ENCODE measurements at regions of chr2 and their contacts with region 1.

Region 1: DNA sequence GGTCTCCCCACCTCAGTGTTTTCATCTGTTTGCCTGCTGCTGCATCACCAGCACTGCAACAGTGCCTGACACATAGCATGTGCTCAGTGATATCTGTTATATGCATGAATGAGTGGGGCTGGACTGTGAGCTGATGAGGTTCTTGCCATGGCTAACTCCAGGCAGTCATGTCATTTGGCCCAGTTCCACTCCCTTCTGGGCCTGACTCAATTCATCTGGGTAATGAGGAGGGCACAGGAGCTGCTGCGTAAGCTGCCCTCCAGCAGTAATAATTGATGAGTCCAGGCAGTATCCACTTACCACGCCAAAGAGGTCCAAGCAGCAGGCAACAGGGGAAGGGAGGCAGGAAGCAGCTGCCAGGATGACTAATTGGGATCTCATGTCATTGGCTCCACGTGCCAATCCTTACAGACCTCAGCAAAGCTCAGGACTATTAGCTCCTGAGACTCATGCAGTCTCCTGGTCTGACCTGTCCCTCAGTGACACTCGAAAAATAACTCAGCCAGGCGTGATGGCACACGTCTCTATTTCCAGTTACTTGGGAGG is 34.1 kb upstream of the MAT2A start:
- DNase-seq: no peak
- ATAC-seq: no peak
- H3K4me3 ChIP-seq: no peak overlapping the region
- H3K27ac ChIP-seq: no peak overlapping the region
- H3K4me1 ChIP-seq: peaks cover 53% of the 10 kb centered on the region
- H3K27me3 ChIP-seq: 0 out of 5 replicates have a peak, but pooled peaks cover 0 to 5% of the 10 kb centered on the region in 2 experiments
- CTCF ChIP-seq: no peak
- EP300 ChIP-seq: no peak
- POLR2A ChIP-seq: no peak
- RAD21 ChIP-seq: no peak

Region 2: GRCh38 chr2:85430752-85431569 is 73.9 kb before region 1 on chr2:
- CTCF ChIA-PET with region 1: no interaction called
- POLR2A ChIA-PET with region 1: no interaction called
- in situ Hi-C with region 1: no loop called
- intact Hi-C with region 1: loop called (anchors 2 kb)
- DNase-seq: no peak
- ATAC-seq: no peak
- H3K4me3 ChIP-seq: no peak overlapping the region
- H3K27ac ChIP-seq: no peak overlapping the region
- H3K4me1 ChIP-seq: peaks cover 38% of the 10 kb centered on the region
- H3K27me3 ChIP-seq: peaks cover 10 to 66% of the 10 kb centered on the region in 2 experiments
- CTCF ChIP-seq: no peak
- EP300 ChIP-seq: no peak
- POLR2A ChIP-seq: no peak
- RAD21 ChIP-seq: no peak

Region 3: DNA sequence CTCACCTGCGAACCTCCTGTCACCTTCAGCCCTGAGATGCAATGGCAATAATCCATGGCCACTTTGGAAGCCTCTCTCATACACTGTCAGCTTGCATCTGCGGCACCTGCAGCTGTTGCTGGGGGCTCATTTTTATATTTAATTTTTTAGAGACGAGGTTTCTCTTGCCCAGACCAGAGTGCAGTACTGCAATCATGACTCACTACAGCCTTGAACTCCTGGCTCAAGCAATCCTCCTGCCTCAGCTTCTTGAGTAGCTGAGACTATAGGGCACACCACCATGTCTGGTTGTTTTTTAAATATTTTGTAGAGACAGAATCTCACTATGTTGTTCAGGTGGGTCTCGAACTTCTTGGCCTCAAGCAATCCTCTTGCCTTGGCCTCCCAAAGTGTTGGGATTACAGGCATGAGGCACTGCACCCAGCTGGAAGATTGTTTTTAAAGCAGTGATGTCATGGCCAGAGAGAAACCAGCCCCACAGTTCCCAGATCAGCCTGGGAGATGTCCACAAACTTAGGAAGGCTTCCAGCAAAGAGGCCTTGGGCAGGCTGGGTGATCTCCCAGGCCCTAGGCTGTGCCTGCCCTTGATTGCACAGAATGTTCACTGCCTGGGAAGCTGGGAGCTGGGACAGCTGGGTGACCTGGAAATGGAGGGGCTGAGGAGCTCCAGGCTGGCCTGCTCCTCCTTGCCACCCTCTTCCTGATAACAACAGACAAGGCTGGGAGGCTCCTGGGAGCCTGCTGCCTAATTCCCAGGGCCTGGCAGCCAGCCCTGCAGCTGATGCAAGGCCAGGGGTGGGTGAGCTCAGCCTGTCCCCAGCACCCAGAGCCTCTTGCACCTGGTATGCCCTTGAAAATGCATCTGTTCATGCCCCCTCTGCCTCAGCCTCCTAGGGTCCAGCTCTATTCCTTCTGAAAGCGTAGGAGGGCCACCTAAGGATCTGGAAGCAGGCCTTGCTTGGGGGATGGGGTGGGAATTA is 59.2 kb before region 1 on chr2:
- CTCF ChIA-PET with region 1: no interaction called
- POLR2A ChIA-PET with region 1: no interaction called
- in situ Hi-C with region 1: no loop called
- intact Hi-C with region 1: no loop called
- DNase-seq: no peak
- ATAC-seq: peak; percentile 46
- H3K4me3 ChIP-seq: no peak overlapping the region
- H3K27ac ChIP-seq: no peak overlapping the region
- H3K4me1 ChIP-seq: peaks cover 32% of the 10 kb centered on the region
- H3K27me3 ChIP-seq: peaks cover 0 to 10% of the 10 kb centered on the region in 2 experiments; a peak in 1 of 5 replicates
- CTCF ChIP-seq: no peak
- EP300 ChIP-seq: no peak
- POLR2A ChIP-seq: no peak
- RAD21 ChIP-seq: no peak

Measured in HepG2 (cell line).